Vagina (tissue), 2 donors: ENCODE measurements at regions of chr5 and their contacts with region 1.

Region 1: GRCh38 chr5:126988021-126988569 is 42.3 kb downstream of the MARCHF3 start:
- DNase-seq: no peak
- H3K4me3 ChIP-seq: no peak overlapping the region
- H3K27ac ChIP-seq: no peak overlapping the region
- H3K4me1 ChIP-seq: no peaks in the 10 kb centered on the region
- H3K27me3 ChIP-seq: no peaks in the 10 kb centered on the region
- CTCF ChIP-seq: no peak
- POLR2A ChIP-seq: no peak

Region 2: GRCh38 chr5:126947146-126948010 is 40.7 kb before region 1 on chr5:
- intact Hi-C with region 1: no loop called
- DNase-seq: no peak
- H3K4me3 ChIP-seq: no peak overlapping the region
- H3K27ac ChIP-seq: no peak overlapping the region
- H3K4me1 ChIP-seq: no peaks in the 10 kb centered on the region
- H3K27me3 ChIP-seq: no peaks in the 10 kb centered on the region
- CTCF ChIP-seq: no peak
- POLR2A ChIP-seq: no peak

Region 3: DNA sequence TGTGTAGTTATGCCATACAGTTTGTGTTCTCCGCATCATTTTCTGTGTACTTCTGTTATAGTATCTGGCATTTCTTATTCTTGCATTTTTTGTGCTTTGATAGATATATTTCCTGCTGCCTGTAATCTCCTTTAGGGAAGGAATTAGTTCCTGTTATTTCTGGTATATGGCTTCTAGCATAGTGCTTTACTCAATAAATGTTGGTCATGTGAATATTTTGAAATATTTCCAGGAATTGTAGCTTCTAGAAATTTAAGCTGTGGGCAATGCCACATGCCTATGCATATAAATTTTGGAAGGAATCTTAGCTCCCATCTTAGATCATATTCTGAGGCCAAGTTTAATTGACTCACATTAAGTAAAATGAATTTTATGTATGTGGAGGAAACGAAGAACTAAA is 517.8 kb after region 1 on chr5:
- intact Hi-C with region 1: loop called (anchors 5 kb)
- DNase-seq: no peak
- H3K4me3 ChIP-seq: no peak overlapping the region
- H3K27ac ChIP-seq: no peak overlapping the region
- H3K4me1 ChIP-seq: no peaks in the 10 kb centered on the region
- H3K27me3 ChIP-seq: no peaks in the 10 kb centered on the region
- CTCF ChIP-seq: no peak
- POLR2A ChIP-seq: no peak